A549 (cell line): ENCODE measurements at regions of chr1 and their contacts with region 1.

Region 1: DNA sequence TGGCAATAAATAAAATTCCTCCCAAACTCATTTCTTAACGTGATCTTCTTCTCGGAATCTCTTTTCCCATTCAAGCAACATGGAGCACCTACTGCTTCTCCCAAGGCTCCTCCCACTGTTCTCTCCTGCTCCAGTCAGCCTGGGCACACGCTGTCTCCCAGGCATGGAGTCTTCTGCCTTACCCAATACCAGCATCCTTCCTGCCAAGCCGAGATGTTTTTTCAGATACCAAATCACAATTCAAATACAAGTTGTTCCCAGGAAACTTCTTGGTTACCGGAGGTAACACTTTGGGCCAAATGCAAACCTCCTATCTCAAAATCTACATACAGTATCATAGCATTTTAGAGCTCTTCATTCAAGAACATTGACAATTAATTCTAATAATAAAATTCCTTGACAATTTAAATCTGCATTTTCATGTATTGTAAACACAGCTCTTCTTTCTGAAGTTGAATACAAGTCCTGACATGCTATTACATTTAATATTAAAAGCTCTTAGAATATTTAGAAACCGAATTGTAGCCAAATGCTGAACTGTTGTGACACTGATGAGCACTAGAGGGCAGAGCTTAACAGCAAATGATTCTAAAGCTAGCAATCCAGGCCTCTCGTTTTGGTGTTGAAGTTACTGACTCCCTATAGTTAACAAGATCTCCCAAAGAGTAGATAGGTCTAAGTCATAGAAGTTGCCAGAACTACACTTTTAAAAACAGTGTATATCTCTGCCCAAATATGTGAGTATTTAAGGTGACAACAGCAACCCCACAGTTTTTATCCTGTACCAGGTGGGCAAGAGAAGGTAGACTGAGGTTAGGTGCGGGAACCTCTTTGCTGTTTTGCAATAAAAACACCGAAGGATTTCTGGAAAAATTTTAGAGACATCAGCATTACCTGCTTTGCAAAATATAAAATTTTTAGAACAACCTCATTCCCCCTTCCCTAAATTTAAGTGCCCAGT is 52.3 kb downstream of the BCAR3 start:
- DNase-seq: peak; percentile 43 to 70
- ATAC-seq: peak; percentile 70 to 79; a peak in 5 of 6 replicates
- H3K4me3 ChIP-seq: no peak overlapping the region
- H3K27ac ChIP-seq: peak overlapping the region; percentile 54 to 61; a peak in 5 of 6 replicates
- H3K4me1 ChIP-seq: peaks cover 76% of the 10 kb centered on the region
- CTCF ChIP-seq: peak; percentile 85
- EP300 ChIP-seq: no peak
- POLR2A ChIP-seq: no peak
- RAD21 ChIP-seq: peak; percentile 91 to 93

Region 2: DNA sequence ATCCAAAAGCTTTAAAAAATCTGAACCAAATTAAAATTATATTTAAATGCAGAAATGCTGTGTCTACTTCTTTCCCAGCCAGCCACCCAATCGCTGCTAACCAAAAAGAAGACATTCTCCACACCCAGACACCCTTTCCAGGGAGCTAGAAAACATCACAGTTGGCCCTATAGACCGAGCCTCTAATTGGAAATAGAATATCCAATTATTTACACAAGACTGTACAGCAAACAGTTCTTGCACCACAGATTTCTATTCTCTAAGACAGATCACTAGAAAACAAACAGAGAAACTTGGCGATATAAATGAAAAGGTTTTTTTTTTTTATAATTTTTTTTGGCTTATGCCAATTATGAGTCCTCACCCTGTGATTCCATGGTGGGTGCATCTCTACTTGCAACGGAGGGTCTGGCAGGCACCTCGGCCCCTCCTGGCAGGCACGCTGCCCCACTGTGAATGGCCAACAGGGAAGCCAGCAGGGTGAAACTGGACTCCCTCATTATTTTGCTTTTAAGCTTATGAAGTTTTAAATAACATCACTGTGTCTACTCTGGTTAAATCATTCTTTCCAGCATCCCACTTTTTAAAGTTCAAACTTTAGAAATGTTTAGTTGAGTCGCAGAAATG is 23.1 kb after region 1 on chr1:
- CTCF ChIA-PET with region 1: interaction called, 11 read pairs
- POLR2A ChIA-PET with region 1: no interaction called
- DNase-seq: no peak
- ATAC-seq: peak in 1 of 2 experiments; percentile 43; a peak in 3 of 6 replicates
- H3K4me3 ChIP-seq: no peak overlapping the region
- H3K27ac ChIP-seq: peak overlapping the region; percentile 35 to 69; a peak in 4 of 6 replicates
- H3K4me1 ChIP-seq: peaks cover 44% of the 10 kb centered on the region
- CTCF ChIP-seq: no peak
- EP300 ChIP-seq: no peak
- POLR2A ChIP-seq: no peak
- RAD21 ChIP-seq: no peak

Region 3: DNA sequence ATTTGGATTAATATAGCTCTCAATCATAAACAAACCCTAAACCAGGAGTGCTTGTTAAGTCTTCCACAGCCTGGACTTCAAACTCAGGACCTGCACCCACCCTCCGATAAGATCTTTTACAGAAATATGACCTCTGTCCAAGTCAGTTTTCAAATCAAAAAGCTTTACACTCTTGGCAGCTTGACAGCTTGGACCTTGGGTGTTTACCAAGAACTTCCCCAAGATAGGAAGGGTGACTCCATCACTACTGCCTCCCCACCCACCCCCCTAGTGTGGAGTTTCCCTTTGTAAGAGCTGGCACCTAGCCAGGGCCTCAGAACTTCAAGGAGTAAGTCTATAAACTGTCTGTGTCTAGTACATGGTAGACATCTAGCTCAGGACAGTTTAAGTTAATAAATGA is 42.7 kb after region 1 on chr1:
- CTCF ChIA-PET with region 1: interaction called, 21 read pairs
- POLR2A ChIA-PET with region 1: no interaction called
- DNase-seq: peak; percentile 24 to 83
- ATAC-seq: peak; percentile 48 to 72; a peak in 4 of 6 replicates
- H3K4me3 ChIP-seq: no peak overlapping the region; the same call in 1 of the 3 replicates
- H3K27ac ChIP-seq: peak overlapping the region; percentile 74 to 86
- H3K4me1 ChIP-seq: peaks cover 100% of the 10 kb centered on the region
- CTCF ChIP-seq: no peak
- EP300 ChIP-seq: peak in 1 of 2 experiments; percentile 50; a peak in 2 of 5 replicates
- POLR2A ChIP-seq: no peak
- RAD21 ChIP-seq: no peak

Region 4: GRCh38 chr1:93680757-93681550 is 51.6 kb after region 1 on chr1:
- CTCF ChIA-PET with region 1: interaction called, 40 read pairs
- POLR2A ChIA-PET with region 1: interaction called, 4 read pairs
- DNase-seq: peak; percentile 90 to 92
- ATAC-seq: peak; percentile 93 to 94
- H3K4me3 ChIP-seq: peak overlapping the region; percentile 94
- H3K27ac ChIP-seq: peak overlapping the region; percentile 93 to 100
- H3K4me1 ChIP-seq: peaks cover 51% of the 10 kb centered on the region
- CTCF ChIP-seq: peak; percentile 36; the same call in 1 of the 3 replicates
- EP300 ChIP-seq: no peak
- POLR2A ChIP-seq: peak; percentile 31; the same call in 1 of the 2 replicates
- RAD21 ChIP-seq: peak; percentile 64 to 67

Region 5: DNA sequence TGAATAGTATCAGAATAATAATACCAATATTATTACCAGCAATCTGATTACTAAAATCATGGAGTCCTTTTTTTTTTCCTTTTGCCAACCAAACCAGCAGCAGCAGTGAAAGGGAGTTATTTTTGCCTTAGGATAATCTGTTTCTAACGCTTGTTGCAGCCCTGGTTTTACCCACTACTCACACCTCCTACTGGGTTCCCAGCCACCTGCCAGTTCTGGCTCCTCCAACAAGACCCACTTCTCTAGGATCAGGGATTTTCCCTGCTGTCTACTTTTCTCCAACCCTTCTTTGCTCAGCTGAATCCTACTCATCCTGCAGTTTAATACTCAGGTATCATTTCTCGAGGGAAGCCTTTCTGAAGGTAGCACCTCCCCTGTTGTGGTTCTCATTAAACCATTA is 149.1 kb after region 1 on chr1:
- CTCF ChIA-PET with region 1: no interaction called
- POLR2A ChIA-PET with region 1: no interaction called
- DNase-seq: no peak
- ATAC-seq: no peak
- H3K4me3 ChIP-seq: no peak overlapping the region
- H3K27ac ChIP-seq: peak overlapping the region; percentile 78 to 90
- H3K4me1 ChIP-seq: peaks cover 53% of the 10 kb centered on the region
- CTCF ChIP-seq: no peak
- EP300 ChIP-seq: no peak
- POLR2A ChIP-seq: no peak
- RAD21 ChIP-seq: no peak

Region 6: GRCh38 chr1:93846211-93846991 is 217.0 kb after region 1 on chr1:
- CTCF ChIA-PET with region 1: interaction called, 25 read pairs
- POLR2A ChIA-PET with region 1: interaction called, 7 read pairs
- DNase-seq: peak; percentile 68 to 82
- ATAC-seq: peak; percentile 74 to 83
- H3K4me3 ChIP-seq: peak overlapping the region; percentile 58
- H3K27ac ChIP-seq: peak overlapping the region; percentile 84 to 95
- H3K4me1 ChIP-seq: peaks cover 19% of the 10 kb centered on the region
- CTCF ChIP-seq: no peak
- EP300 ChIP-seq: no peak
- POLR2A ChIP-seq: peak; percentile 36
- RAD21 ChIP-seq: no peak; a peak in 1 of 5 replicates